Naive thymus-derived CD4-positive, alpha-beta T cell (primary cell): ENCODE measurements at regions of chr11 and their contacts with region 1.

Region 1: DNA sequence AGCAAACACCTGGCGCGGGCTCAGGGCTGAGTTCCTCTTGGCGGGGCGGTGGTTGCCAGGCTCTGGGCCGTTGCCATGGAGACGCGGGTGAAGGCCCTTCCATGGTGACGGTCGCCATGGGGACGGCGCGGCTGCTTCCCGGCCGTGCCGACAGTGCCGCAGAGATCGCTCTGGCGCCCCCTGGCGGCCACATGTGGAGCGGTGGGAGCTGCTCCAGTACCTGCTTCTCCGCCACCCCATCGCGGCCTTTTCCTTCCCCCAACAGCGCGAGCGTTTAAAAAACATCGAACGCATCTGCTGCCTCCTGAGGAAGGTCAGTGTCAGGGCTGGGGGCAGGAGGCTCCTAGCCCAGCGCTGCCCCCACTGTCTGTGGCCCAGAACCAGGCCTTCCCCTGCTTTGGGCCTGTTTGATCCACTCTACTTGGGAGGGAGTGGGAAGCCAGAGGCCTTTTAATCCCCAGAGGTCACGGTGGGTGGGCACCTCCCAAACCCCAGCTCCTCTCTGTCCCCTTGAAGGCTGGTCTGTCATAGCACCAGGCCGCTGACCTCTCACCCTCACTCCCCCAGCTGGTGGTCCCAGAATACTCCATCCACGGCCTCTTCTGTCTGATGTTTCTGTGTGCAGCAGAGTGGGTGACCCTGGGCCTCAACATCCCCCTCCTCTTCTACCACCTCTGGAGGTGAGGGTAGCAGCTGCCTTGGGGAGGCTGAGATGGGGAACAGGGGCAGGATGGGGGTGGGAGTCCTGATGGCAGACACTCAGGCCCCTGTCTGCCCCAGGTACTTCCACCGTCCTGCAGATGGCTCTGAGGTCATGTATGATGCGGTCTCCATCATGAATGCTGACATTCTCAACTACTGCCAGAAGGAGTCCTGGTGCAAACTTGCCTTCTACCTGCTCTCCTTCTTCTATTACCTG is 4.8 kb downstream of the CNIH2 start:
- DNase-seq: peak; percentile 96 to 100 (median 99)
- ATAC-seq: peak; percentile 94
- H3K4me3 ChIP-seq: no peak overlapping the region
- H3K4me3 Mint-ChIP-seq: peak overlapping the region in 9 of 10 donors; percentile 16 to 72 (median 59)
- H3K27ac ChIP-seq: peak overlapping the region; percentile 27
- H3K27ac Mint-ChIP-seq: peak overlapping the region; percentile 68 to 93 (median 85)
- H3K4me1 ChIP-seq: peaks cover 16 to 21% of the 10 kb centered on the region in 2 donors
- H3K4me1 Mint-ChIP-seq: peaks cover 18 to 52% (median 37%) of the 10 kb centered on the region in 7 donors
- H3K27me3 ChIP-seq: no peaks in the 10 kb centered on the region
- H3K27me3 Mint-ChIP-seq: peaks cover 0 to 14% (median 0%) of the 10 kb centered on the region in 5 donors

Region 2: GRCh38 chr11:66051766-66052663 is 230.7 kb before region 1 on chr11 and contains the start of gene SF3B2:
- CTCF ChIA-PET with region 1: no interaction called
- POLR2A ChIA-PET with region 1: no interaction called
- intact Hi-C with region 1: loop called in 1 of 2 experiments (anchors 10 kb)
- DNase-seq: peak; percentile 81 to 94 (median 93)
- ATAC-seq: peak; percentile 99
- H3K4me3 ChIP-seq: peak within 1 kb of the TSS; percentile 88
- H3K4me3 Mint-ChIP-seq: peak within 1 kb of the TSS; percentile 95 to 100 (median 98)
- H3K27ac ChIP-seq: peak within 1 kb of the TSS; percentile 93
- H3K27ac Mint-ChIP-seq: peak within 1 kb of the TSS; percentile 95 to 99 (median 98)
- H3K4me1 ChIP-seq: peaks cover 14 to 18% of the 10 kb centered on the region in 2 donors
- H3K4me1 Mint-ChIP-seq: peaks cover 17 to 44% (median 38%) of the 10 kb centered on the region in 7 donors
- H3K27me3 ChIP-seq: no peaks in the 10 kb centered on the region
- H3K27me3 Mint-ChIP-seq: peaks cover 0 to 9% (median 0%) of the 10 kb centered on the region in 5 donors
- total RNA-seq, gene SF3B2: 163 to 248 (median 206) TPM